WTC11 (cell line): ENCODE measurements at regions of chr1 and their contacts with region 1.

Region 1: DNA sequence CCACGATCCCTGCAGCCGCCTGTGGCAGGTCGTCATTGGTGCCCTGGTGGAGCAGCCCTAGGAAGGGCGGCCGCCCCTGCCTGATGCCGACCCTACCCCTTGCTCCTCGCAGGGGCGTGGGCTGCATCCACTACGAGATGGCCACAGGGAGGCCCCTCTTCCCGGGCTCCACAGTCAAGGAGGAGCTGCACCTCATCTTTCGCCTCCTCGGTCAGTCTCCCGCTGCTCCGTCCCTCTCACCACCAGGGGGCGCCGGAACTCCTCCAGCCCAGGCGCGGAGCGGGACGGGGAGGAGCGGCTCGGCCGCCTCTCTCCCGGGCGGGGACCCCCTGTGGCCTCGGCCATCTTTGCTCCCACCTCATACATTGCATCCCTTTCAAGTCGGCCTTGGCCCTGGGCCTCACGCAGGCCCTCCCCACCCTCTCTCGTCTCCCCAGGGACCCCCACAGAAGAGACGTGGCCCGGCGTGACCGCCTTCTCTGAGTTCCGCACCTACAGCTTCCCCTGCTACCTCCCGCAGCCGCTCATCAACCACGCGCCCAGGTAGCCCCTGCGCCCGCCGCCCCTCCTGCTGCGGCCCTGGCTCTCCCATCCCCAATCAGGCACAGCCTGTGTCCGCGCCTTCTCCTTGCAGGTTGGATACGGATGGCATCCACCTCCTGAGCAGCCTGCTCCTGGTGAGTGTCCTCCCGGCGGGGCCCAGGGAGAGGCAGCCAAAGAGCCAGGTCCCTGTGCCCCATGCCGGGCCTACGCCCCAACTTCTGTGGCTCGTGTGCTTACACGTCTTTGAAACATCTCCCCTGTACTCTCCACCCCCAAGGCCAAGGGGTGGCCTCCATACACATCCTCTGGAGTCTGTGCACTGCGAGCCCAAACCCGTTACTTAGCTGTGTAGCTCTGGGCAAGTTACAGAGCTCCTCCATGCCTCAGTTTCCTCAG is 24.7 kb downstream of the CDK18 start:
- DNase-seq: peak; percentile 94
- ATAC-seq: peak; percentile 84
- H3K4me3 Mint-ChIP-seq: no peak overlapping the region
- H3K27ac Mint-ChIP-seq: no peak overlapping the region
- H3K4me1 Mint-ChIP-seq: peaks cover 16% of the 10 kb centered on the region
- H3K27me3 Mint-ChIP-seq: no peaks in the 10 kb centered on the region
- CTCF ChIP-seq: peak; percentile 95

Region 2: GRCh38 chr1:205279986-205280385 is 249.2 kb before region 1 on chr1:
- CTCF ChIA-PET with region 1: no interaction called
- POLR2A ChIA-PET with region 1: no interaction called
- DNase-seq: no peak
- ATAC-seq: no peak
- H3K4me3 Mint-ChIP-seq: no peak overlapping the region
- H3K27ac Mint-ChIP-seq: no peak overlapping the region
- H3K4me1 Mint-ChIP-seq: peaks cover 21% of the 10 kb centered on the region
- H3K27me3 Mint-ChIP-seq: no peaks in the 10 kb centered on the region
- CTCF ChIP-seq: no peak

Region 3: GRCh38 chr1:205543411-205544301 is 14.5 kb after region 1 on chr1:
- CTCF ChIA-PET with region 1: interaction called, 28 read pairs
- POLR2A ChIA-PET with region 1: interaction called, 3 read pairs
- DNase-seq: peak; percentile 71
- ATAC-seq: peak; percentile 86
- H3K4me3 Mint-ChIP-seq: peak overlapping the region; percentile 67
- H3K27ac Mint-ChIP-seq: peak overlapping the region; percentile 95
- H3K4me1 Mint-ChIP-seq: peaks cover 14% of the 10 kb centered on the region
- H3K27me3 Mint-ChIP-seq: peaks cover 78% of the 10 kb centered on the region
- CTCF ChIP-seq: no peak

Region 4: GRCh38 chr1:205568469-205569361 is 39.6 kb after region 1 on chr1:
- CTCF ChIA-PET with region 1: interaction called, 10 read pairs
- POLR2A ChIA-PET with region 1: no interaction called
- DNase-seq: no peak
- ATAC-seq: peak; percentile 19
- H3K4me3 Mint-ChIP-seq: peak overlapping the region; percentile 68
- H3K27ac Mint-ChIP-seq: no peak overlapping the region
- H3K4me1 Mint-ChIP-seq: peaks cover 12% of the 10 kb centered on the region
- H3K27me3 Mint-ChIP-seq: peaks cover 77% of the 10 kb centered on the region
- CTCF ChIP-seq: no peak

Region 5: DNA sequence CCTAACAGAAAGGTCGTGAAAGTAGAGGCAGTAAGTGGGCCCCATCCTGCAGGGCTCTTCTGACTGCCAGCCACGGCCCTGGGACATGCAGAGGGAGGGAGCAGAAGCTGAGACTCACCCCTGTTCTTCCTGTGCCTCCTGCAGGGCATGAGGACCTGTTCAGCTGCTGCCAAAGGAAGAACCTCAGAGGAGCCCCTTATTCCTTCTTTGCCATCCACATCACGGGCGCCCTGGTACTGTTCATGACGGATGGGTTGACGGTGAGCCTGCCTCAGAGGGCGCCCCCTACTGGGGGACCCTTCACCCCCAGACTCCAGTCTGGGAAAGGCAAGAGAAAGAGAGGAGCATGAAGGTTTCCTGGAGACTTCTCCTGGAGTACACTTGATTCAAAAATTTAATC is 55.6 kb after region 1 on chr1:
- CTCF ChIA-PET with region 1: interaction called, 20 read pairs
- POLR2A ChIA-PET with region 1: no interaction called
- DNase-seq: no peak
- ATAC-seq: peak; percentile 8; the same call in 1 of the 2 replicates
- H3K4me3 Mint-ChIP-seq: no peak overlapping the region
- H3K27ac Mint-ChIP-seq: no peak overlapping the region
- H3K4me1 Mint-ChIP-seq: peaks cover 4% of the 10 kb centered on the region; the same call in 1 of the 2 replicates
- H3K27me3 Mint-ChIP-seq: peaks cover under 1% of the 10 kb centered on the region; the same call in 1 of the 2 replicates
- CTCF ChIP-seq: peak; percentile 58

Region 6: DNA sequence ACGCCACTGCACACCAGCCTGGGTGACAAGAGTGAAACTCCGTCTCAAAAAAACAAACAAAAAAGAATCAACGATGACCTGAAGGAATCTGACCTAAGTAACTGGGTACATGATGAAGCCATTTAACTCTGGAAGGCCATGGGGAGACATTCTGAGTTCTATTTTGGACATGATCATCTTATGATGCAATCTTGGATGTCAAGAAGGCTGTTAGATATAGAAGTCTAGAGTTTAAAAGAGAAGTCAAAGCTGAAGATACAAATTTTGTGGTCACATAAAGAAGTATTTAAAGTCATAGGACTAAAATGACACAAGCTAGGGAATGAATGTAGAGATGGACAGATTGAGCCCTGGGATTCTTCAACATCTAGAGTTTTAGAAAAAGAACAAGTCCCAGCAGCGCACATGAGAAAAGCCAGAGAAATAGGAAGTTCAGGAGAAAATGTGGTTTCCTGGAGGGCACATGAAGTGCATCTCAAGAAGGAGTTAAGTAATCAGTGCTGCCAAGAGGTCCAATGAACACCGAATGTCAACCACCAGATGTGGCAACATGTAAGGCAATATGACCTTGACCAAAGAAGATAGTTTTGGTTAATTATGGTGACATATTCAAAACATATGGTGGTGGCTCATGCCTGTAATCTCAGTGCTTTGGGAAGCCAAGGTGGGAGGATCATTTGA is 75.8 kb after region 1 on chr1:
- CTCF ChIA-PET with region 1: no interaction called
- POLR2A ChIA-PET with region 1: no interaction called
- DNase-seq: no peak
- ATAC-seq: no peak
- H3K4me3 Mint-ChIP-seq: no peak overlapping the region
- H3K27ac Mint-ChIP-seq: no peak overlapping the region
- H3K4me1 Mint-ChIP-seq: no peaks in the 10 kb centered on the region
- H3K27me3 Mint-ChIP-seq: no peaks in the 10 kb centered on the region
- CTCF ChIP-seq: no peak

Region 7: DNA sequence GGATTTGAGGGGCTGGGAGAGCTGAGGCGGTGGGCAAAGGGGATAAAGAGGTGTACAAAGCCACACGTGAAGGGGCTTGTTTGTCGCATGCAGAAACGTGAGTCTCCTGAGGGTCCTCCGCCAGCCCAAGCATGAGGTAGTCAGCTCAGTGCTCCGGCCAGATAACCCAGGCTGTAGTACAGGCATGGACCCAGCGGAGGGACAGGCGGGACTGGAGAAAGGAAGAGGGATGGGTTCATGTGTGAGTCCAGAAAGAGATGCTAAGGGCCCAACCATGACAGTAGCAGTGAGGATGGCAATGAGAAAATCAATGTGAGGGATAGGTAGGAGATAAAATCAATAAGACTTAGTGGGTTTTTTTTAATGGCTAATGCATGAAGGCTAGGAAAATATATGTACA is 116.4 kb after region 1 on chr1:
- CTCF ChIA-PET with region 1: no interaction called
- POLR2A ChIA-PET with region 1: no interaction called
- DNase-seq: no peak
- ATAC-seq: peak; percentile 68
- H3K4me3 Mint-ChIP-seq: no peak overlapping the region
- H3K27ac Mint-ChIP-seq: 0 out of 2 replicates have a peak overlapping the region, but pooled peaks have one; percentile 30
- H3K4me1 Mint-ChIP-seq: peaks cover 24% of the 10 kb centered on the region
- H3K27me3 Mint-ChIP-seq: no peaks in the 10 kb centered on the region
- CTCF ChIP-seq: no peak